ENCODE measurements at regions of chr3 and their contacts with region 1.

Region 1: GRCh38 chr3:66138336-66139313 is 82.2 kb upstream of the SLC25A26 start:
- DNase-seq: no peak
- H3K4me3 ChIP-seq: no peak overlapping the region
- H3K27ac ChIP-seq: no peak overlapping the region
- H3K4me1 ChIP-seq: peaks cover 0 to 5% (median 0%) of the 10 kb centered on the region in 3 donors
- H3K27me3 ChIP-seq: no peaks in the 10 kb centered on the region
- CTCF ChIP-seq: peak; percentile 56 to 80 (median 68)
- POLR2A ChIP-seq: no peak

Region 2: GRCh38 chr3:65785065-65785645 is 353.5 kb before region 1 on chr3:
- intact Hi-C with region 1: loop called (anchors 5 kb)
- DNase-seq: no peak
- H3K4me3 ChIP-seq: no peak overlapping the region
- H3K27ac ChIP-seq: no peak overlapping the region
- H3K4me1 ChIP-seq: peaks cover 0 to 8% (median 2%) of the 10 kb centered on the region in 3 donors
- H3K27me3 ChIP-seq: no peaks in the 10 kb centered on the region
- CTCF ChIP-seq: peak in 5 of 6 experiments; percentile 56 to 73 (median 68)
- POLR2A ChIP-seq: no peak

Region 3: GRCh38 chr3:66179793-66180192 is 41.2 kb after region 1 on chr3:
- intact Hi-C with region 1: no loop called
- DNase-seq: no peak
- H3K4me3 ChIP-seq: no peak overlapping the region
- H3K27ac ChIP-seq: no peak overlapping the region
- H3K4me1 ChIP-seq: no peaks in the 10 kb centered on the region
- H3K27me3 ChIP-seq: no peaks in the 10 kb centered on the region
- CTCF ChIP-seq: no peak
- POLR2A ChIP-seq: no peak

Measured in esophagus squamous epithelium (tissue), 5 donors.